GM12878 (cell line): ENCODE measurements at regions of chr2 and their contacts with region 1.

Region 1: DNA sequence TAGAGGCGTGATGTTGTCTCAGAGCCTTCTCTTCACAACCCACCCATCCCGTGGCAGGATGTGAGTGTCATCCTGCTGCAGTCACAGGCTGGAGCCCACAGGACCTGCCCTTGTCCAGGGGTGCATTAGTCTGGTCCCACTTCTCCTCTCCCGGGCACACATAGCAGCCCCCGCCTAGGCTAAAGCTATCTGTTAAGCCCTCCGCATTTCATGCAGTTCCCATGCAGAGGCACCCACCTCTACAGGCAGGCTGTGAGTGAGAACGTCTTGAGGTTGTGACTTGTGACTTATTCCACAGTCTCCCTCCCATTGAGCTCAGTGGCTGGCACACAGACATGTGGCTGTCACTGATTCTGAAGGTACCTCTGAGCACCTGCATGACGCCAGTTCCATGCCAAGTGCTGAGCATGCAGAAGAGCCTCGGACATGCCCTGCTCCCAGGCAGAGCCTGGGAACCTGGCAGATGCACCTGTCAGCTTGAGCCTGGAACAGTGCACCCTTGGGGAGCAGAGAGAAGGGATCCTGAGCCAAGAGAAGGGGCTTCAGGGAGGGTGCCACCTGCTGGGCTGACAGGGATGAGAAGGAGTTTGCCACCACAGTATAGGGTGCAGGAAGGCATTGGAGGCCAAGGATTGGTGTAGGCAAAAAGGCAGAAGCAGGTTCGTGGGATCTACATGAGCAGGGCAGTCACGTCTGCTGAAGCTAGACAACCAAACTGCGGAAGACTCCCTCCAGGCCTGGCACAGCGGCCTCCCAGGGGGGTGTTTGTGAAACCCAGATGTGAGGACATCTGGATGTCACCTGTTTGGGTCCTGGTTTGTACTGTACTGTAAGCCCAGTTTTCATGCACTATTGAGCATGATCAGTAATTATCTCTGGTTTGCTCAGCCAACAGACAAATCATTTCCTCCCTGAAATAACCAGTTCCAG is 213.6 kb downstream of the GLI2 start:
- DNase-seq: no peak
- ATAC-seq: peak; percentile 59
- H3K4me3 ChIP-seq: no peak overlapping the region
- H3K27ac ChIP-seq: no peak overlapping the region
- H3K4me1 ChIP-seq: no peaks in the 10 kb centered on the region
- H3K27me3 ChIP-seq: no peaks in the 10 kb centered on the region; a peak in 1 of 4 replicates
- CTCF ChIP-seq: peak; percentile 14 to 22 (median 17); a peak in 2 of 6 replicates
- EP300 ChIP-seq: no peak
- POLR2A ChIP-seq: no peak
- RAD21 ChIP-seq: no peak

Region 2: GRCh38 chr2:120699292-120699691 is 250.0 kb before region 1 on chr2:
- CTCF ChIA-PET with region 1: interaction called, 4 read pairs
- POLR2A ChIA-PET with region 1: no interaction called
- RAD21 ChIA-PET with region 1: no interaction called
- SMC1A ChIA-PET with region 1: no interaction called
- in situ Hi-C with region 1: no loop called
- intact Hi-C with region 1: loop called (anchors 5 kb)
- DNase-seq: no peak
- ATAC-seq: no peak
- H3K4me3 ChIP-seq: no peak overlapping the region
- H3K27ac ChIP-seq: no peak overlapping the region
- H3K4me1 ChIP-seq: no peaks in the 10 kb centered on the region
- H3K27me3 ChIP-seq: peaks cover 4 to 6% of the 10 kb centered on the region in 2 experiments; a peak in 3 of 4 replicates
- CTCF ChIP-seq: no peak
- EP300 ChIP-seq: no peak
- POLR2A ChIP-seq: no peak
- RAD21 ChIP-seq: no peak

Region 3: GRCh38 chr2:120820263-120820952 is 128.9 kb before region 1 on chr2:
- CTCF ChIA-PET with region 1: no interaction called
- POLR2A ChIA-PET with region 1: no interaction called
- RAD21 ChIA-PET with region 1: no interaction called
- SMC1A ChIA-PET with region 1: no interaction called
- in situ Hi-C with region 1: no loop called
- intact Hi-C with region 1: no loop called
- DNase-seq: no peak
- ATAC-seq: no peak
- H3K4me3 ChIP-seq: no peak overlapping the region
- H3K27ac ChIP-seq: no peak overlapping the region
- H3K4me1 ChIP-seq: no peaks in the 10 kb centered on the region
- H3K27me3 ChIP-seq: peaks cover under 1 to 2% of the 10 kb centered on the region in 2 experiments; a peak in 2 of 4 replicates
- CTCF ChIP-seq: no peak
- EP300 ChIP-seq: no peak
- POLR2A ChIP-seq: no peak
- RAD21 ChIP-seq: no peak